PC-3 (cell line): ENCODE measurements at regions of chr11 and their contacts with region 1.

Region 1: DNA sequence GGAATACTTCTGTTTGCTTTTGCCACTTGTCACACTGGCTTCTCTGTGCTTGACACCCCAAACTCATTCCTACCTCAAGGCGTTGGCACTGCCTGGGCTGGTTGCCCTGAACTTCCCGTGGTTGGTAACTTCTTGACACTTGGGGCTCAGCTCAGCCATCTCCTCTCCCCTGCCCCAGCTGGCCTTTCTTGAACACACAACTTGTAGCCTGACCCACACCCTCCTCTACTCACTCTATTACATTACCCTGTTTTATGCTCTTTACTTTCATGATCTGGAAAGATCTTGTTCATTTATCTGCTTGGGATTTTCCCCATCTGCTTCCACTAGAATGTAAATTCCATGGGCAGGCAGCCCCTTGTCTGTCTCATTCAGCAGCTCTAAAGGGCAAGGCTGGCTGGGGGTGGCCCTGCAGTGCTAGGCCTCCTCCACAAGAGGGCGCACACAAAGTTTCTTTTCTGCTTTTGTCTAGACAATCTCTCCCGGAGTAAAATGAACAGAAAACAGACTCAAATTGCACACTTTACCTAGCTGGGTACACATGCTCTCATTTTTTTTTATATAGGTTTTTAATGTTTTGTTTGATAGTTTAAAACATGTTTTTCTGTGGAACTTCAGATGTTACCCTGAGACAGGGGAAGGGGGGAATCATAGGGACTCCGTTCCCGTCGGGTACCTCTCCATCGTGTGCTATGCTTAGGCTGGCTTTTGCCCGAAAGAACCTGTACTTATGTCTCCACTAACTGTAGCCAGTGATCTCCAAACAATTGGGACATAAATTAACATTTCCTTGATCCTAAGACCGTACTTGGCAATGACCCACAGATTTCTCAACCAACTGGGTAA is 16.4 kb upstream of the MRGPRX2 start:
- DNase-seq: peak; percentile 75
- ATAC-seq: peak; percentile 41
- H3K4me3 ChIP-seq: peak overlapping the region; percentile 45
- H3K27ac ChIP-seq: peak overlapping the region; percentile 35
- H3K4me1 ChIP-seq: peaks cover 52% of the 10 kb centered on the region
- H3K27me3 ChIP-seq: no peaks in the 10 kb centered on the region
- CTCF ChIP-seq: peak; percentile 94

Region 2: GRCh38 chr11:19101796-19102520 is 25.0 kb after region 1 on chr11:
- CTCF ChIA-PET with region 1: interaction called, 5 read pairs
- POLR2A ChIA-PET with region 1: no interaction called
- intact Hi-C with region 1: loop called (anchors 2 kb)
- DNase-seq: peak; percentile 79
- ATAC-seq: peak; percentile 91
- H3K4me3 ChIP-seq: no peak overlapping the region
- H3K27ac ChIP-seq: no peak overlapping the region
- H3K4me1 ChIP-seq: peaks cover 26% of the 10 kb centered on the region
- H3K27me3 ChIP-seq: no peaks in the 10 kb centered on the region
- CTCF ChIP-seq: no peak

Region 3: DNA sequence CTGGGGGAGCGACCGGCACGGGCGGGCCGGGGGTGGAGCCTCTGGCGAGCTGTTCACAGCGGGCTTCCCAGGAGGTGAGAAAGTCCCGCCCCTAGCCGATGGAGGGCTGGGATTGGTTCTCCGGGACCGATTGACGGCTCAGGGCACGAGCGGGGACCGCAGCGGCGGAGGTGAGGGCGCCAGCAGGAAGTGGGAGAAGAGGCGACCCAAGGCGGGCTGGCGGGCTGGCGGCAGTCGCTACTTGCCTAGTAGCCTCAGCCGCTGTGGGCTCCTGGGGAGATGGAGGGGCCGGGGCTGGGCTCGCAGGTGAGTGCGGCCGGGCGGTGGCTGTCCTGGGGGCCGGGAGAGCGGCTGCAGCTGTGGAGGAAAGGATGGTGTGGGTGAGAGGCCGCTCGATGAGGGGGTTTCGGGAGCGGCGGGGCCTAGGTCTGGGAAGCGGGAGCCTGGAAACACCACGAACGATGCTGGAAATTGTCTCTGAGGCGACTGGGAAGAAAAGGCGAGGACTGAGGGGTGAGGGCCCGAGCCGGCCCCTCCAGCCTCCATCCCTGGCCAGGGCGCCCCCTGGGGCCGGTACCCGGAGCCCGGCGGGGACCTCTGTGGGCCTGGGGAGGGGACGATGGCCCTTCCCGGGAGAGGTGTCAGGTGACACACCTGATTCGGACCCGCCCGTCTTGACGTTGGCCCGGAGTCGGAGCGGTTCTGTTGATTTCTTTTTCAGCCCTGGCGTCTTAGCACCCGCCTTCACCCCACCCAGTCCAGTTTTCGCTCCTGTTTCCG is 40.2 kb after region 1 on chr11 and contains the start of gene ZDHHC13:
- CTCF ChIA-PET with region 1: interaction called, 8 read pairs
- POLR2A ChIA-PET with region 1: no interaction called
- intact Hi-C with region 1: loop called (anchors 1 kb)
- DNase-seq: peak; percentile 95
- ATAC-seq: peak; percentile 97
- H3K4me3 ChIP-seq: peak within 1 kb of the TSS; percentile 76
- H3K27ac ChIP-seq: peak within 1 kb of the TSS; percentile 61
- H3K4me1 ChIP-seq: peaks cover 35% of the 10 kb centered on the region
- H3K27me3 ChIP-seq: no peaks in the 10 kb centered on the region
- CTCF ChIP-seq: peak; percentile 62
- total RNA-seq, gene ZDHHC13: 13.5 and 21.2 TPM in 2 replicates